ENCODE measurements at regions of chr12 and their contacts with region 1.

Region 1: GRCh38 chr12:15532364-15532977 is 210.2 kb downstream of the PTPRO start:
- DNase-seq: peak; percentile 49
- CTCF ChIP-seq: peak; percentile 53

Region 2: DNA sequence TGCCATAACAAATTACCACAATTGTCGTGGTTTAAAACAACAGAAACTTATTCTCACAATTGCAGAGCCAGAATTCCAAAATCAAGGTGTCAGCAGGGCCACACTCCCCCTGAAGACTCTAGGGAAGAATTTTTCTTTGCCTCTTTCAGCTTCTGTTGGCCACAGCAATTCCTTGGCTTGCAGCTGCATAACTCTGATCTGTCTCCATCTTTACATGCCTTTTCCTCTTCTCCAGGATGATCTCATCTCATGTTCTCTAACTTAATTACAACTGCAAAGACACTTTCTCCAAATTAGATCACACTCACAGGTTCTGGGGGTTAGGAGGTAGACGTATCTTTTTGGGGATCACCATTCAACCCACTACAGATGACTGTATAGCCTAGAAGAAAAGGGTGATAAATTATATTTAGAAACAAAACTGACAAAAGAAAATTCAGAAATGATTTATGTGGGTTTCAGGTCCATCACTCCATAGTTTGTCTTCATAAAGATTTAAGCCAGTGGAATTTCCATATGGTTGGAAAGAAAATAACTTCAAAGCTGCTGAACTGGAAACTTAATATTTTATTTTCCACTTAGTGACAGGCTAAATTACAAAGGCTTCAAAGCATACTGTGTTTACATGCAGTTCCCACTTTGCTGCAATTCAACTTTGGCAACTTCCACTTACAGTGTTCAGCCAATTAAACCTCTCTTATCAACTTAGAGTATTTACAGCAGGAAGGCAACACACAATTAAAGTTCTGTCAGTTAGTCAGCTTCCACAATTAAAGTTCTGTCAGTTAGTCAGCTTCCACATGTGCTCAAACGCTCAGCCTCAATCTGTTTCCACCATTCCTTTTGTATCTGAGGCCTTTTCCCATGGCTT is 43.4 kb after region 1 on chr12:
- in situ Hi-C with region 1: loop called (anchors 5 kb)
- DNase-seq: no peak
- CTCF ChIP-seq: no peak

Region 3: DNA sequence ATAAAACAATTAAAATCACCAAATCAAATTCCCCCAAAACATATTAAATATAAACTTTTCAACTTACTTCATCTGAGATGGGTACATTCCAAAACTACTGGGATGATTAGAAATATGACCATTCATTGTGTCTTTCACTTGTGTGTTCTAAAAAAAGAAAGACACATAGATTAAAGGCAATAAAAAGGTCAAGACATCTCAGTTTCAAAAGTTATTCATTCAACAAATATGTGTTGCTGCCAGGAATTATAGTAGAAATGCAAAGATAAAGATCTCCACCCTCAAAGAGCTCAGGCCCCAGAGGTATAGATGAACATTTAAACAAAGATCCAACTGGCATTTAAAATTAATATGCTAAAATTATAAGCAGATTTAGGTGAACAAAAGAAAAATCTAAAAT is 150.4 kb after region 1 on chr12:
- in situ Hi-C with region 1: no loop called
- DNase-seq: no peak
- CTCF ChIP-seq: no peak

Region 4: GRCh38 chr12:15693228-15693911 is 160.9 kb after region 1 on chr12:
- in situ Hi-C with region 1: no loop called
- DNase-seq: no peak
- CTCF ChIP-seq: no peak

Region 5: DNA sequence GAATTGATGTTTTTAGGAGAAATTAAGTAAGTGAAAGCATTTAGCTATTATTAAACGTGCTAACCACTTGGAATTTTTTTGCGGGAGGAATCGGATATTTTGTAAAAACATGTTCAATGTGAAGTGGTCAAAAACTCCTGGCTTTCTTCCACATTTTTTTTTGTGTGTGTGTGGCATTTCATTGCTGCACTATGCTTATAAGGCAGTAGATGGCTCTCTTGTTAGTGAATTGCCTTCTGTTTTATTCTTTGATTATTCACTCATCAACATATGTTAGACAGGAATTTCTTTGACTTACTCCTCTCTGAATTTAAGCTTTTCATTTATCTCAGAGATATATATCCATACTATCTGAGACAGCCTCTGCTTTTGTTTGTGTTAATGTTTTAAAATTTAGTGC is 450.0 kb after region 1 on chr12:
- in situ Hi-C with region 1: no loop called
- DNase-seq: no peak
- CTCF ChIP-seq: no peak